Activated CD4-positive, alpha-beta T cell treated with anti-CD3 and anti-CD28 coated beads for 36 hours (primary cell): ENCODE measurements at regions of chr13 and their contacts with region 1.

Region 1: GRCh38 chr13:46721054-46721453 is 75.9 kb downstream of the ESD start:
- DNase-seq: peak; percentile 67
- ATAC-seq: no peak
- H3K4me3 Mint-ChIP-seq: no peak overlapping the region
- H3K27ac Mint-ChIP-seq: no peak overlapping the region
- H3K4me1 Mint-ChIP-seq: no peaks in the 10 kb centered on the region
- H3K27me3 Mint-ChIP-seq: no peaks in the 10 kb centered on the region

Region 2: GRCh38 chr13:46492946-46493345 is 228.1 kb before region 1 on chr13:
- CTCF ChIA-PET with region 1: interaction called, 11 read pairs
- POLR2A ChIA-PET with region 1: no interaction called
- intact Hi-C with region 1: loop called (anchors 1 kb)
- DNase-seq: no peak
- ATAC-seq: no peak
- H3K4me3 Mint-ChIP-seq: no peak overlapping the region
- H3K27ac Mint-ChIP-seq: no peak overlapping the region
- H3K4me1 Mint-ChIP-seq: no peaks in the 10 kb centered on the region
- H3K27me3 Mint-ChIP-seq: no peaks in the 10 kb centered on the region

Region 3: GRCh38 chr13:47747901-47748300 is 1026.8 kb after region 1 on chr13:
- CTCF ChIA-PET with region 1: no interaction called
- POLR2A ChIA-PET with region 1: no interaction called
- intact Hi-C with region 1: no loop called
- DNase-seq: no peak
- ATAC-seq: no peak
- H3K4me3 Mint-ChIP-seq: no peak overlapping the region
- H3K27ac Mint-ChIP-seq: no peak overlapping the region
- H3K4me1 Mint-ChIP-seq: no peaks in the 10 kb centered on the region
- H3K27me3 Mint-ChIP-seq: peaks cover 9% of the 10 kb centered on the region